ENCODE measurements at regions of chr17 and their contacts with region 1.

Region 1: GRCh38 chr17:56960596-56961538 is at the start of gene COIL:
- DNase-seq: peak; percentile 89
- ATAC-seq: peak; percentile 100
- H3K4me3 ChIP-seq: peak within 1 kb of the TSS; percentile 78
- H3K27ac ChIP-seq: peak within 1 kb of the TSS; percentile 89
- H3K4me1 ChIP-seq: peaks cover 4% of the 10 kb centered on the region; the same call in 1 of the 2 replicates
- H3K27me3 ChIP-seq: no peaks in the 10 kb centered on the region
- CTCF ChIP-seq: peak; percentile 99
- POLR2A ChIP-seq: peak; percentile 77
- RAD21 ChIP-seq: peak; percentile 65
- total RNA-seq, gene COIL: 13.3 and 21.7 TPM in 2 replicates

Region 2: GRCh38 chr17:56977673-56978395 is 17.0 kb after region 1 on chr17 and contains the start of gene SCPEP1:
- CTCF ChIA-PET with region 1: interaction called, 3 read pairs
- POLR2A ChIA-PET with region 1: no interaction called
- dilution Hi-C with region 1: no loop called
- in situ Hi-C with region 1: no loop called
- intact Hi-C with region 1: loop called (anchors 2 kb)
- DNase-seq: peak; percentile 70
- ATAC-seq: peak; percentile 98
- H3K4me3 ChIP-seq: peak within 1 kb of the TSS; percentile 99
- H3K27ac ChIP-seq: no peak within 1 kb of the TSS
- H3K4me1 ChIP-seq: peaks cover 3% of the 10 kb centered on the region
- H3K27me3 ChIP-seq: peaks cover 8% of the 10 kb centered on the region
- CTCF ChIP-seq: no peak
- POLR2A ChIP-seq: peak; percentile 78
- RAD21 ChIP-seq: no peak
- total RNA-seq, gene SCPEP1: 16.5 and 16.7 TPM in 2 replicates

Region 3: DNA sequence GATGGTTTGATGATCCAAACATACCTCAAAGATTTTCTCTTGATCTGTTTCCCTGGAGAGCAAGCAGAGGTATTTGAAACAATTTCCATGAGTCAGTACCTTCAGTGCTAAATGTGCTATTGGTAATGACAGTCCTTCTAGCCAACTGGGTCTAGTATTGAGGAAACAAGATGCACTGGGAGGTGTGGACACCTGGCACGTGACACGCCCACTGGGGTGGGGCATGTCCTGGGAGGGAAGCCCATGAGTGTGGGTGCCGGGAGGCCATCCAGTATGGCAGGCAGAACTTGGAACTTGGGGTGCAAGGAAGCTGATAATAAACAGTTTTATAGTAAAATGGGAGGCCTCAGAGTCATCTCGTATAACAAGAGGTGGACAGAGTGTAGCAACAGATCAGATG is 106.3 kb after region 1 on chr17:
- CTCF ChIA-PET with region 1: no interaction called
- POLR2A ChIA-PET with region 1: no interaction called
- dilution Hi-C with region 1: no loop called
- in situ Hi-C with region 1: no loop called
- intact Hi-C with region 1: no loop called
- DNase-seq: no peak
- ATAC-seq: no peak
- H3K4me3 ChIP-seq: no peak overlapping the region
- H3K27ac ChIP-seq: no peak overlapping the region
- H3K4me1 ChIP-seq: no peaks in the 10 kb centered on the region
- H3K27me3 ChIP-seq: no peaks in the 10 kb centered on the region
- CTCF ChIP-seq: no peak
- POLR2A ChIP-seq: no peak
- RAD21 ChIP-seq: no peak

Region 4: GRCh38 chr17:57833179-57833939 is 872.5 kb after region 1 on chr17:
- CTCF ChIA-PET with region 1: no interaction called
- POLR2A ChIA-PET with region 1: no interaction called
- dilution Hi-C with region 1: no loop called
- in situ Hi-C with region 1: no loop called
- intact Hi-C with region 1: no loop called
- DNase-seq: peak; percentile 76
- ATAC-seq: peak; percentile 93
- H3K4me3 ChIP-seq: peak overlapping the region; percentile 58
- H3K27ac ChIP-seq: no peak overlapping the region; the same call in 1 of the 2 replicates
- H3K4me1 ChIP-seq: 0 out of 2 replicates have a peak, but pooled peaks cover 2% of the 10 kb centered on the region
- H3K27me3 ChIP-seq: no peaks in the 10 kb centered on the region
- CTCF ChIP-seq: peak; percentile 86
- POLR2A ChIP-seq: no peak
- RAD21 ChIP-seq: peak; percentile 79